ENCODE measurements at regions of chr2 and their contacts with region 1.

Region 1: DNA sequence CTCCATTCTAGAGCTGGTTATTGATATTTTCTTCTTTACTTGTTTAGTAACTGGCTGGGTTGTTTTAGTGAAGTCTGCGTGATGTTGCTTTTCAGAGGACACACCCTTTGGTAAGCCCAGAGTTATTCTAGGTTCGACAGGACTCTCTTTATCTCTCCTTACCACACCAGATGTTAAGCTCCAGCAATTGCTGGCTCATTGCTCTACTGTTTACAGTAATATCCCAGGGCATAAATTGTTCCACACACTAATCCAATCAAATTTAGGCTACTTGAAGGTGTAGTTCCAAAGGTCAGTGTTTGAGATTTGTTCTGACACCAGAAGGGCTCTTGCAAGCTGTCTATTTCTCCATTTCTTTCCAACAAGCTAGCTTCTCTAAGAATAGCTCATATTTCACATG is 506.6 kb downstream of the NR4A2 start:
- DNase-seq: peak; percentile 37 to 49
- H3K4me3 ChIP-seq: no peak overlapping the region
- H3K4me3 Mint-ChIP-seq: peak overlapping the region; percentile 42
- H3K27ac Mint-ChIP-seq: peak overlapping the region; percentile 60
- H3K4me1 ChIP-seq: peaks cover 13% of the 10 kb centered on the region
- H3K4me1 Mint-ChIP-seq: peaks cover 16% of the 10 kb centered on the region
- H3K27me3 ChIP-seq: no peaks in the 10 kb centered on the region
- H3K27me3 Mint-ChIP-seq: no peaks in the 10 kb centered on the region
- CTCF ChIP-seq: no peak

Region 2: GRCh38 chr2:155485141-155485842 is 340.6 kb before region 1 on chr2:
- CTCF ChIA-PET with region 1: no interaction called
- POLR2A ChIA-PET with region 1: no interaction called
- intact Hi-C with region 1: no loop called
- DNase-seq: no peak
- H3K4me3 ChIP-seq: no peak overlapping the region
- H3K4me3 Mint-ChIP-seq: no peak overlapping the region
- H3K27ac Mint-ChIP-seq: no peak overlapping the region
- H3K4me1 ChIP-seq: no peaks in the 10 kb centered on the region
- H3K4me1 Mint-ChIP-seq: no peaks in the 10 kb centered on the region
- H3K27me3 ChIP-seq: no peaks in the 10 kb centered on the region
- H3K27me3 Mint-ChIP-seq: no peaks in the 10 kb centered on the region
- CTCF ChIP-seq: no peak

Region 3: DNA sequence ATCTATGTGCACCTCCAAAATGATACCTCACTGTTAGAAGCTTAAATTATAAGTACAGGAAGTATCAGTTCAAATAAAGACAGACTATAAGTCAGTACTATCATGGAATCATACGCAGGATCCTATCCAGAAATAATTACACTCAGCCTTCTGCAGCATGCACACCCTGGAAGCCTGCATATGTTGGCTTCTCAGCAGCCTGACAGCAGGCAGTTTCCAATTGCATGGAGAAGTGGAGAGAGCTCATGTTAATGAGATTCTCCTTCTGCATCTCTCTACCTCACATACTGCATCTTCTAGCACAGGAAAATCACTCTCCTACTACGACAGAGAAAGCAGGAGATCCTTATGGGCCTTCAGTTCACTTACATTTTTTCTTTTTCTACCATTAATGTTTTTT is 486.1 kb after region 1 on chr2:
- CTCF ChIA-PET with region 1: no interaction called
- POLR2A ChIA-PET with region 1: no interaction called
- intact Hi-C with region 1: loop called (anchors 5 kb)
- DNase-seq: no peak
- H3K4me3 ChIP-seq: no peak overlapping the region
- H3K4me3 Mint-ChIP-seq: no peak overlapping the region
- H3K27ac Mint-ChIP-seq: no peak overlapping the region
- H3K4me1 ChIP-seq: peaks cover 5% of the 10 kb centered on the region; the same call in 1 of the 2 replicates
- H3K4me1 Mint-ChIP-seq: no peaks in the 10 kb centered on the region
- H3K27me3 ChIP-seq: no peaks in the 10 kb centered on the region
- H3K27me3 Mint-ChIP-seq: peaks cover 12% of the 10 kb centered on the region
- CTCF ChIP-seq: no peak